GM13977 (cell line): ENCODE measurements at regions of chr7 and their contacts with region 1.

Region 1: DNA sequence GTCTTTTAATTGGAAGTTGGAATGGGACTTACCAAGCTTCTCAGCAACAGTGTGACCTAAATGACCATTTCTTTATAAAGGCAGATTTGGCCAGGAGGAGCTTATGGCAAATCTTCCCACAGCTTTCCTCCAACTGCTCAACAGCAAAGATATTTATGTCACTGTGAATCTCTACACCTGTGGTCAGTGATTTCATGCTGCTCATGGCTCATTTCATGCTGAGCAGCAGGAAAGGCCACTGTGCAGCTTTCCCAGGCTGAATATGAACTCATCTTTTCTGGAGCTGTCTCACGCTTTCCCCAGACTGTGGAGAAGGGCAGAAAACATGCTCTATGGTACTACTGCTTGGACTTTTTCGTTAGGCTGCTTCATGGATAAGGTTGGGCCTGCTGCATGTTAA is 29.8 kb downstream of the CALCR start:
- DNase-seq: no peak
- CTCF ChIP-seq: no peak

Region 2: DNA sequence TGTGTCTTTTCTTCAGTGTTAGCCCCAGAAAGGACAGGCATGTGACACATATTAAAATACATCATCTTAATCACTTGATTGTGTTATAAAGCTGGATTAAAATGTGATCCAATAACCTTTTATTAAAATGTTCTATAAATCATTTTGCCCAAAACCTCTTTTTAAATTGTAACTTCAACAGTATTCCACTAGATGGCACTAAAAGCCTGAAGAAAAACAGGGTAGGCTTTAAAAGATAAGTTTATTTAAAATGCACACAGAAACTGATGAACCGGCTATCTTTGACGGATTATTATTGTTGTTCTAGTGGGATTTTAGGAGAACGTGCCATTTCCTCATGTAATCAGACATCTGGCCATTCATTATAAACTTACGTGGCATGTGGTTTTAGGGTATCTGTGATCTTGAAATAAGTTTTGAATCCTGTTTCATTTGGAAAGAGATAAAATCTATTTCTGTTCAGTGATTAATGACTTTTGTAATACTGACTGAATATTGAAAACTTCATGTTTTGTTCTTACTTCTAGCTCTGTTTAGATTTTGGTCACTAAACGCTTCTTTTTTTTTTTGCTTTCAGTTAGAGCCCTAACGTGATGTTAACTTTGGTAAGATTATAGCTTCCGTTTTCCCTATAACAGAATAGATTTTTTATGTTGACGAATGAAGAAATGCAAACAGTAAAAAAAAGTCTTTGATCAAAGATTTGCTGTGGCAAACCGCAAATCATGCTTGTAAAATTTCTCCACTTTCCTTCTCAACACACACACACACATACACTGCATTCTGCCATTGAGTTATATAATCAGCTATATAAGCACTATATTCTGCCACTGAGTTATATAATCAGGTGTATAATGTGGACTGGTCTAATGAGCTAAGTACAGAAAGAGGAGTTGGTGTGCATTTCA is 298.9 kb before region 1 on chr7:
- in situ Hi-C with region 1: loop called (anchors 10 kb)
- DNase-seq: no peak
- CTCF ChIP-seq: peak; percentile 51